Caco-2 (cell line): ENCODE measurements at regions of chr2 and their contacts with region 1.

Region 1: DNA sequence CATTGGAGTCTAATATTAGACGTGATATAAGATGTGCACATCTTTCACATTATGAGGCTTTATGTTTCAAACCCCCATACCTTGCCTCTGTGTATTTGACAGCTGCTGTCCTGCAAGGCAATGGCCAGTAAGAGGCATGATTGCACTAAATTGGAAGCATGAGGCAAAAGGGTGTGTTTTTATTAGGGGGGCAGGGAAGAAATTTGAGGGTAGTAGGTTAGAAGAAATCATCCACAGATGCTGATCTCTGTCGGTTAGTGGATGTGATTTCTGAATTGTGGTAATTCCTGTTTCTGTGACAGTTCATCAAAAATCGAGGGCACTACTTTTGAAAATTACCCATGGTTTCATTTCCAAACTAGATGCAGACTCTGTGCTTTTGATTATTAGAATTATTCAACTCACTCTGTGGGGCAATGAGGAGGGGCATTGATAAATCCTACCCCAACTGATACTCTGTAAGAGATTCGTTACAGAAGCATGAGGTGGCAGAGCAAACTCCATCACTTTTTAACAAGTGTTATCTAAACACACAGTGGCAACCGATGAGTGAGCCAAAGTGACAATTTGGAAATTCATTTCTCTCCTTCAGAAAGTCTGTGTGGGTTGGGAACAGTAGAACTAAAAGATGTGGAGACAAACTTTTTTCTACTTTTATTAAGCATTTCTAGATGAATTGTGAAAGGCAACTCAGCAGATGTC is 453.0 kb downstream of the ARHGAP15 start:
- DNase-seq: no peak
- H3K4me3 ChIP-seq: no peak overlapping the region
- H3K4me3 Mint-ChIP-seq: no peak overlapping the region
- H3K27ac Mint-ChIP-seq: no peak overlapping the region
- H3K4me1 ChIP-seq: no peaks in the 10 kb centered on the region
- H3K4me1 Mint-ChIP-seq: no peaks in the 10 kb centered on the region
- H3K27me3 ChIP-seq: no peaks in the 10 kb centered on the region
- H3K27me3 Mint-ChIP-seq: peaks cover 6% of the 10 kb centered on the region
- CTCF ChIP-seq: no peak

Region 2: GRCh38 chr2:143344780-143345179 is 237.4 kb before region 1 on chr2:
- CTCF ChIA-PET with region 1: no interaction called
- POLR2A ChIA-PET with region 1: no interaction called
- intact Hi-C with region 1: no loop called
- DNase-seq: no peak
- H3K4me3 ChIP-seq: no peak overlapping the region
- H3K4me3 Mint-ChIP-seq: no peak overlapping the region
- H3K27ac Mint-ChIP-seq: no peak overlapping the region
- H3K4me1 ChIP-seq: no peaks in the 10 kb centered on the region
- H3K4me1 Mint-ChIP-seq: no peaks in the 10 kb centered on the region
- H3K27me3 ChIP-seq: no peaks in the 10 kb centered on the region
- H3K27me3 Mint-ChIP-seq: peaks cover 13% of the 10 kb centered on the region
- CTCF ChIP-seq: no peak

Region 3: GRCh38 chr2:143513081-143513480 is 69.1 kb before region 1 on chr2:
- CTCF ChIA-PET with region 1: no interaction called
- POLR2A ChIA-PET with region 1: no interaction called
- intact Hi-C with region 1: no loop called
- DNase-seq: peak in 1 of 2 experiments; percentile 16
- H3K4me3 ChIP-seq: no peak overlapping the region
- H3K4me3 Mint-ChIP-seq: no peak overlapping the region
- H3K27ac Mint-ChIP-seq: no peak overlapping the region
- H3K4me1 ChIP-seq: no peaks in the 10 kb centered on the region
- H3K4me1 Mint-ChIP-seq: no peaks in the 10 kb centered on the region
- H3K27me3 ChIP-seq: no peaks in the 10 kb centered on the region
- H3K27me3 Mint-ChIP-seq: peaks cover 8% of the 10 kb centered on the region
- CTCF ChIP-seq: peak; percentile 54 to 58

Region 4: GRCh38 chr2:143742581-143742980 is 160.4 kb after region 1 on chr2:
- CTCF ChIA-PET with region 1: no interaction called
- POLR2A ChIA-PET with region 1: no interaction called
- intact Hi-C with region 1: loop called (anchors 1 kb)
- DNase-seq: no peak
- H3K4me3 ChIP-seq: no peak overlapping the region
- H3K4me3 Mint-ChIP-seq: no peak overlapping the region
- H3K27ac Mint-ChIP-seq: no peak overlapping the region
- H3K4me1 ChIP-seq: no peaks in the 10 kb centered on the region
- H3K4me1 Mint-ChIP-seq: peaks cover 5% of the 10 kb centered on the region
- H3K27me3 ChIP-seq: no peaks in the 10 kb centered on the region
- H3K27me3 Mint-ChIP-seq: no peaks in the 10 kb centered on the region
- CTCF ChIP-seq: no peak

Region 5: DNA sequence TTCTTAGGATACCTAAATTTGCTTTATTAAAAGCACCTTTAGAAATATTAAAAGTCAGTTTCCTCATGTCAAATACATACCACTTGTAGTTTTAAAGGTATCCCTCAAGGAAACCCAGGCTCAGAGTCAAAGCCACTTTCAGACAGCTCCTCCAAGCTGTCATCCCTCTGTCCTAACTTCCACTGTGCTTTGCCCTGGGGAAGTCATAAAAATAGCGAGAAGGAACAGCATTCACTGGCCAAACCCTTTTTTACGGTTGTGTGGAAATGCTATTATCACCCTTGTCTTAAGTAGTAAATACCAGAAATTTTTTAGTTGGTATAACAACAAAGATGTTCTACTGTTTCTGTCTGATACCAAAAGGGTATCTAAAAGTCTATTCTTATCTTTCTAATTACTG is 257.3 kb after region 1 on chr2:
- CTCF ChIA-PET with region 1: no interaction called
- POLR2A ChIA-PET with region 1: no interaction called
- intact Hi-C with region 1: loop called (anchors 10 kb)
- DNase-seq: peak; percentile 46 to 60
- H3K4me3 ChIP-seq: no peak overlapping the region
- H3K4me3 Mint-ChIP-seq: no peak overlapping the region
- H3K27ac Mint-ChIP-seq: no peak overlapping the region
- H3K4me1 ChIP-seq: peaks cover 14% of the 10 kb centered on the region
- H3K4me1 Mint-ChIP-seq: peaks cover 13% of the 10 kb centered on the region
- H3K27me3 ChIP-seq: no peaks in the 10 kb centered on the region
- H3K27me3 Mint-ChIP-seq: no peaks in the 10 kb centered on the region
- CTCF ChIP-seq: no peak

Region 6: DNA sequence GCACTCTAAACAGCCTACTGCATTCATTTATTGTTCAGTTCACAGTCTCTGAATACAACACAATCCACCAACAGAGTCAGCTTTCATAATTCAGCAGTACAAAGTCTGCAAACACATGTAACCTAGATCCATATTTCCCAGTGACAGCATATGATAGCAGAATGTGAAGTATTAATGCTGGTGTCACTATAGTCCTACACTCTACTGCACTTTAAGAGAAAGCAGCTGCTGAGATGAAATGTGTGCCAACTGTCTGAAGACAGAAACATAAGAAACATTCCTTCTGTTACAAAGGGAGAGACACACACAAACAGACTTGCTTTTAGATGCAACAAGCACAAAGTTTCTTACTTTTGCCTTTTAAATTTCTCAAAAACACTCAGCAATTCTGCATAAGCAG is 495.9 kb after region 1 on chr2:
- CTCF ChIA-PET with region 1: no interaction called
- POLR2A ChIA-PET with region 1: no interaction called
- intact Hi-C with region 1: loop called (anchors 10 kb)
- DNase-seq: no peak
- H3K4me3 ChIP-seq: no peak overlapping the region
- H3K4me3 Mint-ChIP-seq: no peak overlapping the region
- H3K27ac Mint-ChIP-seq: no peak overlapping the region
- H3K4me1 ChIP-seq: no peaks in the 10 kb centered on the region
- H3K4me1 Mint-ChIP-seq: no peaks in the 10 kb centered on the region
- H3K27me3 ChIP-seq: no peaks in the 10 kb centered on the region
- H3K27me3 Mint-ChIP-seq: no peaks in the 10 kb centered on the region
- CTCF ChIP-seq: no peak